BJ (cell line): ENCODE measurements at regions of chr11 and their contacts with region 1.

Region 1: GRCh38 chr11:110230377-110230776 is 66.0 kb downstream of the RDX start:
- DNase-seq: no peak
- H3K4me3 ChIP-seq: no peak overlapping the region
- H3K27me3 ChIP-seq: no peaks in the 10 kb centered on the region
- CTCF ChIP-seq: no peak

Region 2: DNA sequence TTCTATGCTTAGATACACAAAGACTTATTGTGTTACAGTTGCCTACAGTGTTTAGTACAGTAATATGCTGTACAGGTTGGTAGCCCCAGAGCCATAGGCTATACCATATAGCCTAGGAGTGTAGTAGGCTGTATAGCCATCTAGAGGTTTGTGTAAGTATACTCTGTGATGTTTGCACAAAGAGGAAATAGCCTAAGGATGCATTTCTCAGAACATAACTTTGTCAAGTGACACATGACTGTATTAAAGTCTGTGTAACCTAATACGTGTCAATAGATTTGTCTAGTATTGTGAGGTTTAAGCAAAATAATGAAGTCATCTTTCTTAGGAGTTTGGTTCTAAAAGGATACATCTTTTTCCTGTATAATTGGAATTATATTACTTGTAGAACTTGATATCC is 131.7 kb before region 1 on chr11:
- CTCF ChIA-PET with region 1: no interaction called
- POLR2A ChIA-PET with region 1: no interaction called
- DNase-seq: no peak
- H3K4me3 ChIP-seq: no peak overlapping the region
- H3K27me3 ChIP-seq: no peaks in the 10 kb centered on the region
- CTCF ChIP-seq: no peak

Region 3: GRCh38 chr11:110358336-110358735 is 128.0 kb after region 1 on chr11:
- CTCF ChIA-PET with region 1: no interaction called
- POLR2A ChIA-PET with region 1: interaction called, 10 read pairs
- DNase-seq: no peak
- H3K4me3 ChIP-seq: no peak overlapping the region
- H3K27me3 ChIP-seq: peaks cover 1% of the 10 kb centered on the region; the same call in 1 of the 2 replicates
- CTCF ChIP-seq: no peak